ENCODE measurements at regions of chr1 and their contacts with region 1.

Region 1: GRCh38 chr1:160193091-160193819 is 2.9 kb downstream of the CASQ1 start:
- DNase-seq: peak; percentile 92

Region 2: DNA sequence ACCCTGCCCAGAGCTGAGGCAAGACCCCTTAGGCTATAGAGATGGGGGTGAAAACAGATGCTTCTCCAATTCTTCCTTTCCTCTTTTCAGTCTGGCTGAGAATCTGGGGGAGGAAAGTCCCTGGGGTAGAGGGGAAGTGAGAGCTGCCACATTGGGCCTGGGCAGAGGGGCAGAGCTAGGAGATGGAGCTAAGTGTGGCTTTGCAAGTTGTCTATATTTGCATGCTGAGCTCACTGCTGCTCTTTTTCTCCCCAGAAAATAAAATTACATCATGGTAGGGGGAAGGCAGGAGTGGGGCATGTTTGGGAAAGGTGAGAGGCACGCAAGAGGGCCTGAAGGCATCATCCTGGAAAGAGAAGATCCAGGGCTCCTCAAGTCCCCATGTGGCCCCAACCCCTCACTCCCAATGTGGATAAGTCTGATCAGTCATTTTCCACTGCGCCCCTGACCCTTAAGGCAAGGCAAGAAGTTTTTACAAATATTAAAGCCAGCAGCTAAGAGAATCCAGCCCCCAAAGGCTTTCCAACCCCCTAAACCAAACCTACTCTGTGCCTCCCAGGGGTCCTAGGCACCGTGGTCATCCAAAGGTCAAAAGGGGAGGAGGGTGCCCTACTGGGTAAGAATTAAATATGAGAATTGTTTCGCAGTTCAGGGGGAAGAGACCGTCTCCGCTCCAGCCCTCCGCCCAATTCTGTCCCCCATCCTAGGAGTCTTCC is 11.4 kb after region 1 on chr1:
- CTCF ChIA-PET with region 1: interaction called, 12 read pairs
- POLR2A ChIA-PET with region 1: interaction called, 7 read pairs
- DNase-seq: no peak

Region 3: DNA sequence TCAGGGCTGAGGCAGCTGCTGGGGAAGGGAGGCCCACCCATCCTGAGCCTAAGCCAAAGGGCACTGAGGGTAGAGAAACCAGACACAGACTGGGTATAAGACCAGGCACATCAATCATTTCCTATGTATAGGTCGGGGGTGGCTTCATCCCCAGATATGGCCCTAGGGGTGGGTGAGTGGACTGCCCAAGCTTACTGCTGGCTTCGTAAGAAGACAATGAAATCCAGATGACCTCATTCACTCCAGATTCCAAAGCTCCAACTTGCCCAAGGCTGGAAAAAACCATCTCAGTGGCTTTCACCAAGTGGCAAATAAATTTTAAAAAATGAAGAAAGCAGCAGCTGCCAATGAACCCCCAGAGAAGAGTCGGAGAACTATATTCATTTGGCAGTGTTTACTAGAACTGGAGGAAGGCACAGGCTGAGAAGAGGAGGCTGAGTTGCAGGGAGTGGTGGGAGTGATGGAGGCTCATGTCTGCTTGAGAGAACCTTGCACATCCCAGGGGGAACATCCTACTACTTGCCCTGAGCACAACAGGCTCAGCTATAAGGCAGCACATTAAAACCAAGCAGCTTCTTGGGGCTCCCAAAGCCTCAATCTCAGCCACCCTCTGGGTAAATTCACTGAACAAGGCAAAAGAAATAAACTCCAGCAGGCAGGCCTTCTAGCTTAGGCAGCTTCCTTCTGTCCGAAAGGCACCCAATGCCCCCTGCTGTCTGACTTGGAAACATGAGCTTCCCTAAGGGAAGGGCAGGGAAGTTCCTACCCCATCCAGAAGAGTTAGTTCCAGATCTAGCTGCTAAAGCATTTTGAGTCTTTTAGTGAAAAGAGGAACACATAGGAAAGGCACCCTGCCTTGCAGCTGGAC is 26.0 kb after region 1 on chr1:
- CTCF ChIA-PET with region 1: interaction called, 30 read pairs
- POLR2A ChIA-PET with region 1: no interaction called
- DNase-seq: peak; percentile 57

Region 4: GRCh38 chr1:160251687-160252526 is 58.7 kb after region 1 on chr1:
- CTCF ChIA-PET with region 1: interaction called, 20 read pairs
- POLR2A ChIA-PET with region 1: interaction called, 5 read pairs
- DNase-seq: peak; percentile 78